Heart right ventricle (tissue), 16 donors: ENCODE measurements at regions of chr1 and their contacts with region 1.

Region 1: DNA sequence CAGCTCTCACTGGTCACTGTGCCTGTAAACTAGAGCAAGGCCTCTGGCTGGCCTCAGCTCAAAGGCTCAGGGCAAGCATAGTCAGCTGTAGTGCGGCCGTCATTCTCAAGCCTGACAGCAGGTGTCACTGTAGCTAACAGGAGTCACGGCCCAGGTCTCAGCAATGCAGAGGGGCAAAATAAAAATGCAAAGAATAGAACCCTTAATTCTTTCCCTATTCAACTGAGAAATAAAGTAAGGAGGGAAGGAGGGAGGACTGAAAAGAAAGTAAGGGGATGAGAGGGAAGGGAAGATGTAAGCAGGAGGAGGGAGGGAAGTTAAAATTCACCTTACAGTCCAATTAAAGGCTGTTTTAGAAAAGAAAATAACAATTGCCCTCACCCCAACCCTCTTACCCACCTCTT is 106.1 kb downstream of the KIAA0319L start:
- DNase-seq: peak; percentile 81 to 85
- ATAC-seq: peak; percentile 83 to 96 (median 88)
- H3K4me3 ChIP-seq: no peak overlapping the region
- H3K27ac ChIP-seq: peak overlapping the region in 4 of 10 donors; percentile 39 to 76 (median 63)
- H3K4me1 ChIP-seq: peaks cover 3 to 90% (median 40%) of the 10 kb centered on the region in 9 donors
- H3K27me3 ChIP-seq: no peaks in the 10 kb centered on the region
- CTCF ChIP-seq: peak; percentile 68 to 94 (median 85)

Region 2: DNA sequence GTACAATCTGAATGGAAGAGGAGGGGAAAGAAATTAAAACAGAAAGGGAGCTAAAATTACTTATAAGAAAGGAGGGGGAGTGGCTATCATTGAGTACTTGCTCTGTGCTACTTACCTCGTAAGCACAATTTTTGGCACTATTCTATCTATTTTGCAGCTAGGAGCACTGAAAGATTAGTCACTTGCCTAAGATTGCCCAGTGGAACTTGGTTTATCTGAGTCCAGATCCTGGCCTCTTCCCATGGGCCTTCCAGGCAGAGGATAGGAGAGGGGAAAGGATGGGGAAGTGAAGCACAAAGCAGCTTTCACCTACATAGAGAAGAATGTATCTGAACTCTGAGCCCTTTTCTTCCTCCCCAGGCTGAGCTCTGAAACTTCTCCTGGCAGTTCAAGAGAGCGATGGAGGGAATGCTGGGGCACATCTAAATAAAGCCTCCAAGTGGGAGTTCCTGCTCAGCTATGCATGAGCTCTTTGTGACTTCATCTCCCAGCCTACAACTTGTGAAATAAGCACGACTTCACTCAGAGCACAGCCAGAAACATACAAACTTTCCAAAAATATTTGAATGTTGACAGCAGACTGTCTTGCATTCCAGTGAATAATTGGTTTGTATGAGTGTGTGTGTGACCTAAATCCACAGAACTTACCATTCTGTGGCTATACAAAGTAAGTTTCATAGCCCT is 1557.8 kb before region 1 on chr1:
- intact Hi-C with region 1: no loop called
- DNase-seq: no peak
- ATAC-seq: peak; percentile 72 to 93 (median 84)
- H3K4me3 ChIP-seq: no peak overlapping the region
- H3K27ac ChIP-seq: peak overlapping the region in 6 of 10 donors; percentile 17 to 48 (median 40)
- H3K4me1 ChIP-seq: peaks cover 0 to 19% (median 5%) of the 10 kb centered on the region in 9 donors
- H3K27me3 ChIP-seq: no peaks in the 10 kb centered on the region
- CTCF ChIP-seq: no peak

Region 3: GRCh38 chr1:35544978-35545377 is 93.9 kb after region 1 on chr1:
- intact Hi-C with region 1: loop called in 3 of 10 experiments (anchors 5 kb)
- DNase-seq: peak in 1 of 2 donors; percentile 65
- ATAC-seq: peak; percentile 73 to 89 (median 86)
- H3K4me3 ChIP-seq: no peak overlapping the region
- H3K27ac ChIP-seq: peak overlapping the region in 3 of 10 donors; percentile 20 to 60 (median 42)
- H3K4me1 ChIP-seq: peaks cover 0 to 76% (median 54%) of the 10 kb centered on the region in 9 donors
- H3K27me3 ChIP-seq: no peaks in the 10 kb centered on the region
- CTCF ChIP-seq: peak in 7 of 9 donors; percentile 16 to 62 (median 51)

Region 4: GRCh38 chr1:35564037-35564883 is 113.1 kb after region 1 on chr1:
- intact Hi-C with region 1: loop called (anchors 1 to 5 kb)
- DNase-seq: peak; percentile 68 to 83
- ATAC-seq: peak in 7 of 8 donors; percentile 23 to 63 (median 38)
- H3K4me3 ChIP-seq: no peak overlapping the region
- H3K27ac ChIP-seq: no peak overlapping the region
- H3K4me1 ChIP-seq: peaks cover 0 to 33% (median 10%) of the 10 kb centered on the region in 9 donors
- H3K27me3 ChIP-seq: peaks cover 0 to 2% (median 0%) of the 10 kb centered on the region in 7 donors
- CTCF ChIP-seq: peak; percentile 67 to 87 (median 79)

Region 5: GRCh38 chr1:35592991-35593694 is 142.0 kb after region 1 on chr1:
- intact Hi-C with region 1: no loop called
- DNase-seq: no peak
- ATAC-seq: no peak
- H3K4me3 ChIP-seq: no peak overlapping the region
- H3K27ac ChIP-seq: no peak overlapping the region
- H3K4me1 ChIP-seq: no peaks in the 10 kb centered on the region
- H3K27me3 ChIP-seq: no peaks in the 10 kb centered on the region
- CTCF ChIP-seq: no peak

Region 6: DNA sequence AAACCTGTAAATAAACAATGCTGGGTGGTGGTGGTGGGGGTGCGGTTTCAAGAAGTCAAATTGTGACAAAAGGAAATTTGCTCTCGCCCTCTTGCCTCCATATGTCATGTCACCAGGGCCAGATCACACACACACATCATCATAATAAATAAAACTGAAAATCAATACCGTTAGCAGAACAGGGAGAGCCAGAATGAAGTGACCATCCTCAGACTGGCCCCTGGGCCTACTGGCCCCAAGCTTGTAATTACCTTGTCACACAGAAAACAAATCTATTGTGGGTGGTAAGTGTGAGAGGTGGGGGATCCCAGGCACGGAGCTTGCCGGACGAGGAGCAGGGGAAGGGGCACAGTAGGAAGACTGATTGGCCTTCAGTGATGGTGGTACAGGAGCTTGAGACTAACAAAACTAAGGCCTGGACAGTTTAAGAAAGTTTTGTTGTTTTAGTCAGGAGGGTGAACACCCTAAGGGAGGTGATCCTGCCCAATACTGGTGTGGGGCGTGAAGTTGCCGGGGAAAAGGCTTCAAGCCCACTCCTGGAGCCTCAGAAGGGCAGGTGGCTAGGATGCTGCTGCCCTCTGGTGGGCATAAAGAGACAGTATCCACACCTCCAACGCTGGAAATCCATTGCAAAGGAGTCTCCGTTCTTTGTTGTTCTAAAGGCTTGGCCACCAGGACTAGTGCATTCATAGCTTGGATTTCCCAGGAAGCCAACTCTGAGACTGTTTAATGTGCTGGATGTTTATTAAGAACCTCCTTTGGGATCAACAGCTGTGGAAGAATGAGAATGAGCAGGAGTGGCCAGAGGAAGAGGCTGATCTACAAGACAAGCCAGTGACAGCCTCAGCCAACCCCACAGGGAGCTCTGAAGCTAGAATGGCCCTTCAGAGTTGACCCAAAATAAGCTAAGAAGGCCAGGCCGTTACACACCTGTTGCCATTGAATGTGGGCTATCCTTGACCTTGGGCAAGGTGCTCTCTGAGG is 275.6 kb after region 1 on chr1:
- intact Hi-C with region 1: loop called in 6 of 10 experiments (anchors 5 to 10 kb)
- DNase-seq: peak; percentile 22 to 33
- ATAC-seq: peak; percentile 81 to 93 (median 88)
- H3K4me3 ChIP-seq: no peak overlapping the region
- H3K27ac ChIP-seq: no peak overlapping the region
- H3K4me1 ChIP-seq: no peaks in the 10 kb centered on the region
- H3K27me3 ChIP-seq: no peaks in the 10 kb centered on the region
- CTCF ChIP-seq: peak; percentile 81 to 91 (median 88)

Region 7: DNA sequence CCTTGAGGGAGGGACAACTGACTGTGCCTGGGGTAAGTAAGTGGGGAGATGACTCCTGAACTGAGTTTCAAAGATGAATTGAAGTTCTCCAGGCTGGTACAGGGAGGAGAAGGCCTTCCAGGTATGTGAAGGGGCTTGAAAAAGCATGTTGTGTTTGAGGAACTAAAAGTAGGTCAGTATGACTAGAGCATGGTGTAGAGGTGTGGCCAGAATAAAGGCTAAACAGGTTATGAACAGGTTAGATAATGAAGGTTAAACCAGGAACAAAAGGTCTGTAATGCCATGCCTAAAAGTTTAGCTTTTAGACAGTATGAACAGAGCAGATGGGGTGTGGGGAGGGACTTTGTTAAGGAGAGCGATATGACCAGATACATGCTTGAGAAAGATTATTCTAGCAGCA is 326.0 kb after region 1 on chr1:
- intact Hi-C with region 1: loop called in 2 of 10 experiments (anchors 5 kb)
- DNase-seq: no peak
- ATAC-seq: no peak
- H3K4me3 ChIP-seq: no peak overlapping the region
- H3K27ac ChIP-seq: no peak overlapping the region
- H3K4me1 ChIP-seq: no peaks in the 10 kb centered on the region
- H3K27me3 ChIP-seq: no peaks in the 10 kb centered on the region
- CTCF ChIP-seq: no peak